ENCODE measurements at regions of chrX and their contacts with region 1.

Region 1: GRCh38 chrX:135484641-135485289 is 35.7 kb upstream of the INTS6L start:
- DNase-seq: peak; percentile 32
- ATAC-seq: peak; percentile 73; the same call in 1 of the 2 replicates
- H3K4me3 ChIP-seq: no peak overlapping the region
- H3K27ac ChIP-seq: no peak overlapping the region
- H3K4me1 ChIP-seq: no peaks in the 10 kb centered on the region
- H3K27me3 ChIP-seq: no peaks in the 10 kb centered on the region; the same call in 1 of the 2 replicates
- CTCF ChIP-seq: peak; percentile 81

Region 2: GRCh38 chrX:135596495-135596894 is 111.7 kb after region 1 on chrX:
- CTCF ChIA-PET with region 1: no interaction called
- POLR2A ChIA-PET with region 1: no interaction called
- in situ Hi-C with region 1: no loop called
- intact Hi-C with region 1: loop called (anchors 2 kb)
- DNase-seq: no peak
- ATAC-seq: peak; percentile 88
- H3K4me3 ChIP-seq: no peak overlapping the region
- H3K27ac ChIP-seq: no peak overlapping the region
- H3K4me1 ChIP-seq: no peaks in the 10 kb centered on the region
- H3K27me3 ChIP-seq: peaks cover 2% of the 10 kb centered on the region
- CTCF ChIP-seq: peak; percentile 87

Region 3: DNA sequence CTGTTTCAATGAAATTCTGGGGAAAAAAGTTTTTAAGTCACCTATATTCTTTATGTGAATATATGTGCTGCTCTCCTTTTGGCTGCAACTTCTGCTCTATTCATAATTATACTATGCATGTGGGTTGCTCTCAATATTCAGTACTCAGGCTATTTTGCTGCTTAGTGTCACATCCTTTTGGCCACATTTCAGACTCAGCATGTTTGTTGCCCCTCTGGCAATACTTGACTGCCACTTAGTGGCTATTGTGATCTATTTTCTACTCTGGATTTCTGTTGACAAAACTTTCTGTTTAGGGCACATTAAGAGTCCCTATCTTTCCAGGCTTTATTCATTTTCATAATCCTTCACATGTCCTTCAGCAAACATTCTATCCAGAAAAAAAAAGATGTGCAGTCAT is 212.8 kb after region 1 on chrX:
- CTCF ChIA-PET with region 1: no interaction called
- POLR2A ChIA-PET with region 1: no interaction called
- in situ Hi-C with region 1: no loop called
- intact Hi-C with region 1: loop called (anchors 10 kb)
- DNase-seq: no peak
- ATAC-seq: no peak
- H3K4me3 ChIP-seq: no peak overlapping the region
- H3K27ac ChIP-seq: no peak overlapping the region
- H3K4me1 ChIP-seq: no peaks in the 10 kb centered on the region
- H3K27me3 ChIP-seq: peaks cover 9% of the 10 kb centered on the region
- CTCF ChIP-seq: peak; percentile 18; the same call in 1 of the 2 replicates

Region 4: GRCh38 chrX:135931644-135932487 is 447.1 kb after region 1 on chrX:
- CTCF ChIA-PET with region 1: no interaction called
- POLR2A ChIA-PET with region 1: no interaction called
- in situ Hi-C with region 1: no loop called
- intact Hi-C with region 1: loop called (anchors 10 kb)
- DNase-seq: peak; percentile 38
- ATAC-seq: peak; percentile 96
- H3K4me3 ChIP-seq: no peak overlapping the region
- H3K27ac ChIP-seq: no peak overlapping the region
- H3K4me1 ChIP-seq: no peaks in the 10 kb centered on the region
- H3K27me3 ChIP-seq: no peaks in the 10 kb centered on the region
- CTCF ChIP-seq: peak; percentile 89